Left ventricle myocardium superior (tissue), 1 donor: ENCODE measurements at regions of chr9 and their contacts with region 1.

Region 1: DNA sequence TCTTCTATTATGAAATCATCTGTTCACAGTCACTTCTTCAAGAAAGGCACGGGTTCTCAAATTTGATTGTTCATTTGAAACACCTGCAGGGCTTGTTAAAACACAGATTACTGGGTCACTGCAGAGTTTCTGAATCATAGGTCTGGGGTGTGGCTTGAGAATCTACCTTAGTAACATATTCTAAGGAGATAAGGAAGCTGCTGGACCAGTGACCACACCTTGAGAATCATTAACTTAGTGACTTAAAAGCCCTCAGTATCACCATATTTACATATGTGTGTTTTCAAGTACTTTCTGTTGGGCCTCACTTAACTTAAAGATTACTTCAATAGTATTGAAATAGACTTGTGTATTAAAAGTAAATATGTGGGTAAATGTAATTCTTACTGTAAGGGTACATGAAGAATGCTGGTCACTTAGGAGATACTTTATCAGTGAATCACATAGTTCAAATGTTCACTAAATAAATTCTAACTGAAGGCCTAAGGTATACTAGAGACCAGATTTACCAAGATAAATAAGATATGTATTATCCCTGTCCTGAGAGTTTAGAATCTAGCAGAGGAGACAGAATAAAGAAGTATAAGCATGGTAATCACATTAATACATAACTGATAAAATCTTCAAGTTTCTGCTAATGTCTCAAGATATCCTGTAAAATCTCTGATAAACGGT is 1342.1 kb upstream of the C9orf72 start:
- DNase-seq: no peak
- ATAC-seq: no peak

Region 2: GRCh38 chr9:28583832-28584231 is 331.6 kb before region 1 on chr9:
- intact Hi-C with region 1: no loop called
- DNase-seq: no peak
- ATAC-seq: no peak

Region 3: DNA sequence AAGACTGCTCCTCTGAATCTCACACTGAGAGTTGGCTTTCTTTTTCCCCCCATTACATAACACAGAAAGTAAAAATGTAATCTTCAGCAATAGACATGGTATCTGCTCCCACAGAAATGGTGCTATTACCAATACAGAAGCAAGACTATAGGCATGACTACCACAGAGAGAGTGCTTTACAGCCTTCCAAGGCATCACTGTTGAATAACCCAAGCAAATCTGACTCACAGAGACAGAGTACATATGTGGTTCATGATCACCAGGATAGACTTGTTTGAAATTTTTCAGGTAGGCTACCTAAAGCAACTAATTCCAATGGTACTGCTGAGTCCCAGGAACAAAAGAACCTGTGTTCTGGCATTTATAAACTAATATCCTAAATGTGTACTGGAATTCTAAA is 31.3 kb after region 1 on chr9:
- intact Hi-C with region 1: loop called (anchors 5 kb)
- DNase-seq: no peak
- ATAC-seq: no peak